A673 (cell line): ENCODE measurements at regions of chr14 and their contacts with region 1.

Region 1: GRCh38 chr14:106872611-106873446 is 1346.4 kb downstream of the TMEM121 start:
- DNase-seq: peak; percentile 85
- H3K4me3 ChIP-seq: no peak overlapping the region
- H3K27ac ChIP-seq: no peak overlapping the region
- H3K4me1 ChIP-seq: no peaks in the 10 kb centered on the region
- H3K27me3 ChIP-seq: peaks cover 4% of the 10 kb centered on the region
- CTCF ChIP-seq: peak; percentile 76

Region 2: GRCh38 chr14:106642090-106642489 is 230.7 kb before region 1 on chr14:
- CTCF ChIA-PET with region 1: no interaction called
- POLR2A ChIA-PET with region 1: no interaction called
- intact Hi-C with region 1: no loop called
- DNase-seq: no peak
- H3K4me3 ChIP-seq: no peak overlapping the region
- H3K27ac ChIP-seq: no peak overlapping the region
- H3K4me1 ChIP-seq: no peaks in the 10 kb centered on the region
- H3K27me3 ChIP-seq: no peaks in the 10 kb centered on the region
- CTCF ChIP-seq: no peak

Region 3: GRCh38 chr14:106694627-106695401 is 178.0 kb before region 1 on chr14:
- CTCF ChIA-PET with region 1: interaction called, 12 read pairs
- POLR2A ChIA-PET with region 1: no interaction called
- intact Hi-C with region 1: no loop called
- DNase-seq: peak; percentile 47
- H3K4me3 ChIP-seq: no peak overlapping the region
- H3K27ac ChIP-seq: no peak overlapping the region
- H3K4me1 ChIP-seq: no peaks in the 10 kb centered on the region
- H3K27me3 ChIP-seq: no peaks in the 10 kb centered on the region
- CTCF ChIP-seq: peak; percentile 58

Region 4: DNA sequence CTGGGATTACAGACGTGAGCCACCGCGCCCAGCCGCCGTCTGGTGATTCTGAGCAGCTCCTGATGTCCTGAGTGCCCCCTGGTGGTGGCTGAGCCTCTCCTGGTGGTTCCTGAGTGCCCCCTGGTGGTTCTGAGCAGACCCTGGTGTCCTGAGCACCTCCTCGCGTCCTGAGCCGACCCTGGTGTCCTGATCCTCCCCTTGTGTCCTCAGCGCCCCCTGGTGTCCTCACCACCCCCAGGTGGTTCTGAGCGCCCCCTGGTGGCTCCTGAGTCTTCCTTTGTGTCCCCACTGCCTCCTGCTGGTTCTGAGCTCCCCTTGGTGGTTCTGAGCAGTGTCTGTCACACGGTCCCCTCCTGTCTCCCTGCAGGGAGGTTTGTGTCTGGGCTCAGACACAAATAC is 41.5 kb before region 1 on chr14:
- CTCF ChIA-PET with region 1: interaction called, 17 read pairs
- POLR2A ChIA-PET with region 1: no interaction called
- intact Hi-C with region 1: no loop called
- DNase-seq: peak; percentile 48
- H3K4me3 ChIP-seq: no peak overlapping the region
- H3K27ac ChIP-seq: no peak overlapping the region
- H3K4me1 ChIP-seq: no peaks in the 10 kb centered on the region
- H3K27me3 ChIP-seq: no peaks in the 10 kb centered on the region
- CTCF ChIP-seq: peak; percentile 70